HCT116 (cell line): ENCODE measurements at regions of chr11 and their contacts with region 1.

Region 1: GRCh38 chr11:64553551-64554201 is 37.3 kb upstream of the SLC22A12 start:
- DNase-seq: no peak
- ATAC-seq: peak; percentile 95
- H3K4me3 ChIP-seq: no peak overlapping the region
- H3K27ac ChIP-seq: no peak overlapping the region
- H3K4me1 ChIP-seq: no peaks in the 10 kb centered on the region; a peak in 1 of 4 replicates
- H3K27me3 ChIP-seq: no peaks in the 10 kb centered on the region
- CTCF ChIP-seq: peak; percentile 91 to 98 (median 95)
- POLR2A ChIP-seq: no peak
- RAD21 ChIP-seq: peak; percentile 91

Region 2: GRCh38 chr11:64204464-64204989 is 349.1 kb before region 1 on chr11:
- CTCF ChIA-PET with region 1: no interaction called
- POLR2A ChIA-PET with region 1: no interaction called
- RAD21 ChIA-PET with region 1: no interaction called
- intact Hi-C with region 1: no loop called
- DNase-seq: peak; percentile 88
- ATAC-seq: peak; percentile 80
- H3K4me3 ChIP-seq: no peak overlapping the region
- H3K27ac ChIP-seq: no peak overlapping the region
- H3K4me1 ChIP-seq: peaks cover 0 to 8% of the 10 kb centered on the region in 2 experiments; a peak in 1 of 4 replicates
- H3K27me3 ChIP-seq: no peaks in the 10 kb centered on the region
- CTCF ChIP-seq: peak; percentile 75 to 90 (median 87)
- POLR2A ChIP-seq: no peak
- RAD21 ChIP-seq: peak; percentile 94

Region 3: DNA sequence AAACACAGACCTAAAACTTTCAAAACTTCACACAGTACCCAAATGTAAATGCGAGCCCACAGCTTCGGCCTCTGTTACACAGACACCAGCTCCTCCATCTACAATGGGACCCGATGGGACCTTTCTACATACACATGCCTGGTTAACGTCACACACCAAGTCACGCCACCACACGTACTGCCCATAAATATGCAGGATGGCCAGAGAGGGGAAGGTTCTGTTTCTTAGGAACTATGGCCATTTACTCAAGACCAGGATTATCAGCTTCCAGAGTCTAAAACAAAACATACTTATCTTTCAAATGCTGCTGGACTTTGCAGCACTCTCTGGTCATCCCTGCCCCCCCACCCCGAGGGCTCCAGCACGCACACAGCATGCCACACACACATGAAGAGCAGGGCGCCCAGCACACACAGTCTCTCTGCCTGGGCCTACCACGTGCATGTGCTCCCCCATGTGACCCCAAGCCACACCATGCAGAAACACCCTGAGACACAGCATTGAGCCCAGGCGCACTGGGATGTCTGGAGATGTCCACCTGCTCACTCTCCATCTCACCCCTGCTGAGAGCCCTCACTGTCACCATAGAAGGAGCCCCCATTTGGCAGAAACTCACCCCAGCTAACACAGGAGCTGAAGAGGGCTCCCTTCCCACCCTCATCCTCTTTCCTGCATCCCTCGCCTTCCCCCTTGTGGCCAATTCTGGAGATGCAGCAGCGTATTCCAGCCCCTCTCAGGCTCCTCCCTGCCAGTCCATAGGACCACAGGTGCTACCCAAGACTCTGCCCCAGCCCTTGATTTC is 99.1 kb after region 1 on chr11:
- CTCF ChIA-PET with region 1: interaction called, 3 read pairs
- POLR2A ChIA-PET with region 1: no interaction called
- RAD21 ChIA-PET with region 1: no interaction called
- intact Hi-C with region 1: loop called (anchors 1 kb)
- DNase-seq: peak; percentile 63
- ATAC-seq: peak; percentile 91
- H3K4me3 ChIP-seq: no peak overlapping the region
- H3K27ac ChIP-seq: no peak overlapping the region
- H3K4me1 ChIP-seq: peaks cover 0 to 9% of the 10 kb centered on the region in 2 experiments; a peak in 3 of 4 replicates
- H3K27me3 ChIP-seq: no peaks in the 10 kb centered on the region
- CTCF ChIP-seq: peak; percentile 88 to 96 (median 89)
- POLR2A ChIP-seq: no peak
- RAD21 ChIP-seq: peak; percentile 93

Region 4: GRCh38 chr11:64723117-64723906 is 169.6 kb after region 1 on chr11 and contains the start of gene NRXN2:
- CTCF ChIA-PET with region 1: no interaction called
- POLR2A ChIA-PET with region 1: no interaction called
- RAD21 ChIA-PET with region 1: no interaction called
- intact Hi-C with region 1: loop called (anchors 5 kb)
- DNase-seq: peak; percentile 53
- ATAC-seq: peak; percentile 99
- H3K4me3 ChIP-seq: peak within 1 kb of the TSS; percentile 37 to 58
- H3K27ac ChIP-seq: no peak within 1 kb of the TSS; the same call in 1 of the 2 replicates
- H3K4me1 ChIP-seq: peaks cover 0 to 10% of the 10 kb centered on the region in 2 experiments; a peak in 1 of 4 replicates
- H3K27me3 ChIP-seq: 0 out of 2 replicates have a peak, but pooled peaks cover 6% of the 10 kb centered on the region
- CTCF ChIP-seq: peak; percentile 88 to 98 (median 96)
- POLR2A ChIP-seq: no peak
- RAD21 ChIP-seq: peak; percentile 80
- total RNA-seq, gene NRXN2: 1.5 TPM

Region 5: GRCh38 chr11:64742889-64743590 is 189.4 kb after region 1 on chr11:
- CTCF ChIA-PET with region 1: no interaction called
- POLR2A ChIA-PET with region 1: no interaction called
- RAD21 ChIA-PET with region 1: no interaction called
- intact Hi-C with region 1: loop called (anchors 5 kb)
- DNase-seq: no peak
- ATAC-seq: peak; percentile 77
- H3K4me3 ChIP-seq: peak overlapping the region; percentile 63 to 83
- H3K27ac ChIP-seq: peak overlapping the region; percentile 44; the same call in 1 of the 2 replicates
- H3K4me1 ChIP-seq: peaks cover 7 to 26% of the 10 kb centered on the region in 2 experiments; a peak in 3 of 4 replicates
- H3K27me3 ChIP-seq: no peaks in the 10 kb centered on the region
- CTCF ChIP-seq: peak; percentile 48 to 89 (median 67); a peak in 5 of 6 replicates
- POLR2A ChIP-seq: peak; percentile 7
- RAD21 ChIP-seq: peak; percentile 57

Region 6: GRCh38 chr11:65027213-65028067 is 473.8 kb after region 1 on chr11 and contains the start of gene SNX15:
- CTCF ChIA-PET with region 1: no interaction called
- POLR2A ChIA-PET with region 1: no interaction called
- RAD21 ChIA-PET with region 1: no interaction called
- intact Hi-C with region 1: no loop called
- DNase-seq: peak; percentile 97
- ATAC-seq: peak; percentile 93
- H3K4me3 ChIP-seq: peak within 1 kb of the TSS; percentile 39 to 44
- H3K27ac ChIP-seq: peak within 1 kb of the TSS; percentile 75
- H3K4me1 ChIP-seq: peaks cover 11 to 22% of the 10 kb centered on the region in 2 experiments; a peak in 3 of 4 replicates
- H3K27me3 ChIP-seq: no peaks in the 10 kb centered on the region
- CTCF ChIP-seq: peak; percentile 12 to 61 (median 42); a peak in 4 of 6 replicates
- POLR2A ChIP-seq: peak; percentile 49
- RAD21 ChIP-seq: no peak
- total RNA-seq, gene SNX15: 16.8 TPM